Endothelial cell of umbilical vein (primary cell): ENCODE measurements at regions of chr10 and their contacts with region 1.

Region 1: GRCh38 chr10:102752934-102753664 is 9.4 kb downstream of the WBP1L start:
- DNase-seq: peak; percentile 87
- H3K4me3 ChIP-seq: no peak overlapping the region
- H3K27ac ChIP-seq: peak overlapping the region; percentile 24
- H3K4me1 ChIP-seq: peaks cover 7% of the 10 kb centered on the region
- H3K27me3 ChIP-seq: no peaks in the 10 kb centered on the region
- CTCF ChIP-seq: peak; percentile 65 to 70
- POLR2A ChIP-seq: no peak

Region 2: GRCh38 chr10:102729029-102730026 is 23.8 kb before region 1 on chr10:
- CTCF ChIA-PET with region 1: no interaction called
- POLR2A ChIA-PET with region 1: no interaction called
- dilution Hi-C with region 1: no loop called
- intact Hi-C with region 1: loop called (anchors 1 kb)
- DNase-seq: peak; percentile 78
- H3K4me3 ChIP-seq: no peak overlapping the region
- H3K27ac ChIP-seq: no peak overlapping the region
- H3K4me1 ChIP-seq: no peaks in the 10 kb centered on the region
- H3K27me3 ChIP-seq: no peaks in the 10 kb centered on the region
- CTCF ChIP-seq: peak; percentile 90 to 92
- POLR2A ChIP-seq: no peak

Region 3: GRCh38 chr10:102776779-102777456 is 23.8 kb after region 1 on chr10:
- CTCF ChIA-PET with region 1: interaction called, 44 read pairs
- POLR2A ChIA-PET with region 1: no interaction called
- dilution Hi-C with region 1: no loop called
- intact Hi-C with region 1: loop called (anchors 1 kb)
- DNase-seq: peak; percentile 92
- H3K4me3 ChIP-seq: peak overlapping the region; percentile 0 to 76 (median 54)
- H3K27ac ChIP-seq: peak overlapping the region; percentile 98
- H3K4me1 ChIP-seq: peaks cover 67% of the 10 kb centered on the region
- H3K27me3 ChIP-seq: no peaks in the 10 kb centered on the region
- CTCF ChIP-seq: no peak
- POLR2A ChIP-seq: peak; percentile 62

Region 4: DNA sequence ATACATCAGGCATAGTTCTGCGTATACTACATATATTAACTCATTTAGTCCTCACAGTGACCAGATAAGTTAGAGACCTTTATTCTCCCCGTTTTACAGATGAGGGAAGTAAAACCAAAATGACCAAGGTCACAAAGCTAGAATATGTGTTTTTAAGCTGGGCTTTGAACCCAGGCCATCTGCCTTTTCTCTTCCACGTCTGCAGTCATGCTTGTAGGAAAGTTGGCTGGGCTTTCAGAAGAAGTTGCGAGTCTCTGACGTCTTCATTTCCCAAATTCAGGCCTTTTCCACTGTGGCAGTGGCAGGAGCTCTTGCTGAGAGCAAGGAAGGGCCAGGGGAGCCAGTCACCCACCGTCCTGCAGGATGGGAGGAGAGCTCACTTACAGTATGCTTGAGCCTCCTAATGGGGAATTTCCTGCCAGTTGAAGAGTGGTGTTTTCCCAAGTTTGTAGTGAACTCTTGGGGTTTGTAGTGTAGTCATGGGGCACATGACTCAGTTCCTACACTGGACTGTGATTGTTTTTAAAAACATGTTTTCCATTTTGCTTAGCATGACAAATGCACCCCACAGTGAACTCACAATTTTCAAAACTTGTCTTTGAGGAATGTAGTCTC is 49.9 kb after region 1 on chr10:
- CTCF ChIA-PET with region 1: interaction called, 13 read pairs
- POLR2A ChIA-PET with region 1: interaction called, 8 read pairs
- dilution Hi-C with region 1: no loop called
- intact Hi-C with region 1: loop called (anchors 1 kb)
- DNase-seq: peak; percentile 99
- H3K4me3 ChIP-seq: no peak overlapping the region
- H3K27ac ChIP-seq: peak overlapping the region; percentile 95
- H3K4me1 ChIP-seq: peaks cover 46% of the 10 kb centered on the region
- H3K27me3 ChIP-seq: no peaks in the 10 kb centered on the region
- CTCF ChIP-seq: no peak
- POLR2A ChIP-seq: peak; percentile 52

Region 5: GRCh38 chr10:102835007-102835482 is 81.9 kb after region 1 on chr10:
- CTCF ChIA-PET with region 1: interaction called, 15 read pairs
- POLR2A ChIA-PET with region 1: no interaction called
- dilution Hi-C with region 1: no loop called
- intact Hi-C with region 1: loop called (anchors 1 kb)
- DNase-seq: peak; percentile 80
- H3K4me3 ChIP-seq: no peak overlapping the region
- H3K27ac ChIP-seq: no peak overlapping the region
- H3K4me1 ChIP-seq: no peaks in the 10 kb centered on the region
- H3K27me3 ChIP-seq: peaks cover 0 to 4% of the 10 kb centered on the region in 2 experiments
- CTCF ChIP-seq: peak; percentile 82 to 85
- POLR2A ChIP-seq: no peak